Motor neuron (in vitro differentiated cells): ENCODE measurements at regions of chr19 and their contacts with region 1.

Region 1: DNA sequence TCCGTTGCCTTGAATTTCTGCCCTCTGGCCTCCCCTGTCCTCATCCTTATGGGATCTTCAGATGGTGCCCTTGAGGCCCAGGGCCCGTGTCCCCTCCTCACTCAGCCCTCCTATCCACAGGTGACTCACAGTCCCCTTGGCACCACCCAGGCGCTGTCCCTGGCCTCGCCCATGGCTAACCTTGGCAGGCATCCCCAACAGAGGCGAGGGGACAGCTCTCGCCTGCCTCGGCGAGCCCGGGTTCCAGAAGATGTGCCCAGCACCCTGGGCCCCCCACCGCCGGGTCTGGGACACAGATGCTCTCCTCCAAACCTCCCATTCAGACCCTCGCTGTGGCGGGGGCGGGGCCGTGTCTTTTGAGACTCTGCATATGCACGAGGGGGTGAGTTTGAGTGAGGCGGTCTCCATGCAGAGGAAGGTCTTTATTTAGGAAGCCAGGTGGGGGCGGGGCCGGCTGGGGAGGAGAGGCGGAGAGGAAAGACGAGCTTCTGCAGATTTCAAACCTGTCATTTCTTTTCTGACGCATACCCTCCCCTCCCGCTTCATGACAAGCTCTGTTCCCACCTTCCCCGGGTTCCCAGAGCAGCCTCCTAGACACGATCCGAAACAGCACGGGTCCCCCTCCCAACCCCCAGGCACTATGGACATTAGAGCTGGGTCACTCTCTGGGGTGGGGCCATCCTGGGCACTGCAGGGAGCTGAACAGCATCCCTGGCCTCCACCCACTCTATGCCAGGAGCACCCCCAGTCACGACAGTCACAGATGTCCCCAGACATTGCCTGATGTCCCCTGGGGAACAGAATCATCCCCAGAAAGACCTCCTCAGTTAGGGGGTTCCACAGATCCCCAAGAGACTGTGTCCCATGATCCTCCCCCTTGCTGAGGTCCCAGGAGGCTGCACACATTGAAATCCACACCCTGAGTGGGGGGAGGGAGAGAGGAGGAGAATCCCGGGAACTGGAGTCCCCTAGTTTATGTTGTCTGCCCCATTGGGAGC is 48.5 kb downstream of the GNG7 start:
- ATAC-seq: peak; percentile 39 to 76 (median 58)
- H3K4me3 ChIP-seq: no peak overlapping the region
- H3K27ac ChIP-seq: no peak overlapping the region
- H3K4me1 ChIP-seq: peaks cover 2 to 9% of the 10 kb centered on the region in 2 donors

Region 2: GRCh38 chr19:2524838-2525723 is 128.9 kb before region 1 on chr19:
- in situ Hi-C with region 1: no loop called
- ATAC-seq: peak; percentile 66 to 92 (median 88)
- H3K4me3 ChIP-seq: no peak overlapping the region
- H3K27ac ChIP-seq: peak overlapping the region in 1 of 2 donors; percentile 10
- H3K4me1 ChIP-seq: peaks cover 15 to 26% of the 10 kb centered on the region in 2 donors

Region 3: DNA sequence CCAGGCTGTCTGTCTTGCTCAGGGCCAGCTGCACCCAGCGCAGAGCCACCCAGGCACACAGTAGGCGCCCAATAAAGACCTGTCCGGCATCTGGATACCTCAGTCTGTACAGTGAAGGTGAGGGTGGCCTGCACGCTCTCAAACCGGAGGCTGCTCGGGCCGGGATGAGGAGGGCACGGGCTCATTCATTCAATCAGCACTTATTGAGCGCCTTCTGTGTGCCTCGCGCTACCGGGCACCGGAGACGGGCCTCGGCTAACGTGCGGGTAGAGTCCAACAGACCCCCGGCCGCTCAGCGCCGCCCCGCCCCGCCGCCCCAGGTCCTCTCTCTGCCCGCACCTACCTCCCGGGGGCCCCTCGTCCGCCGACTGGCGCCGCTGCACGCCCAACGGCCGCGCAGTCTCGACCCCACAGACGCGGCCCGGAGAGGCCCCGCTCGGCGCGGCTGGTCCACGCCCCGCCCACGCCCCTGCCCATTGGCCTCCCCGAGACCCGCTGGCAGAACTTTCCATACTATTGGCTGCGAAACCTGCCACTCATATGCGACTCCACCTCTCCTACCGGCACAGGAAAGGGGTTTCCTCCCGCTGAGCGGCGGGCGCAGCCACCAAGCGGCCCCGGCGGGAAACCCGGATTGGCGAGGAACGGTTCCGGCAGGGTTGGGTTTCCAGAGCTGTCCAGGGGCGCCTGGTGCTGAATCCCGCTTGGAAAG is 85.7 kb after region 1 on chr19 and contains the start of gene SLC39A3:
- in situ Hi-C with region 1: loop called in 1 of 9 experiments (anchors 10 kb)
- ATAC-seq: peak; percentile 98 to 100 (median 99)
- H3K4me3 ChIP-seq: peak within 1 kb of the TSS; percentile 69 to 92 (median 85)
- H3K27ac ChIP-seq: peak within 1 kb of the TSS; percentile 66 to 87
- H3K4me1 ChIP-seq: peaks cover 2 to 4% of the 10 kb centered on the region in 2 donors
- total RNA-seq, gene SLC39A3: 13.7 to 33.4 (median 26.4) TPM

Region 4: GRCh38 chr19:2747349-2747748 is 93.3 kb after region 1 on chr19:
- in situ Hi-C with region 1: loop called in 2 of 9 experiments (anchors 5 to 10 kb)
- ATAC-seq: no peak
- H3K4me3 ChIP-seq: no peak overlapping the region
- H3K27ac ChIP-seq: no peak overlapping the region
- H3K4me1 ChIP-seq: no peaks in the 10 kb centered on the region